CD4-positive, alpha-beta T cell (primary cell): ENCODE measurements at regions of chr19 and their contacts with region 1.

Region 1: DNA sequence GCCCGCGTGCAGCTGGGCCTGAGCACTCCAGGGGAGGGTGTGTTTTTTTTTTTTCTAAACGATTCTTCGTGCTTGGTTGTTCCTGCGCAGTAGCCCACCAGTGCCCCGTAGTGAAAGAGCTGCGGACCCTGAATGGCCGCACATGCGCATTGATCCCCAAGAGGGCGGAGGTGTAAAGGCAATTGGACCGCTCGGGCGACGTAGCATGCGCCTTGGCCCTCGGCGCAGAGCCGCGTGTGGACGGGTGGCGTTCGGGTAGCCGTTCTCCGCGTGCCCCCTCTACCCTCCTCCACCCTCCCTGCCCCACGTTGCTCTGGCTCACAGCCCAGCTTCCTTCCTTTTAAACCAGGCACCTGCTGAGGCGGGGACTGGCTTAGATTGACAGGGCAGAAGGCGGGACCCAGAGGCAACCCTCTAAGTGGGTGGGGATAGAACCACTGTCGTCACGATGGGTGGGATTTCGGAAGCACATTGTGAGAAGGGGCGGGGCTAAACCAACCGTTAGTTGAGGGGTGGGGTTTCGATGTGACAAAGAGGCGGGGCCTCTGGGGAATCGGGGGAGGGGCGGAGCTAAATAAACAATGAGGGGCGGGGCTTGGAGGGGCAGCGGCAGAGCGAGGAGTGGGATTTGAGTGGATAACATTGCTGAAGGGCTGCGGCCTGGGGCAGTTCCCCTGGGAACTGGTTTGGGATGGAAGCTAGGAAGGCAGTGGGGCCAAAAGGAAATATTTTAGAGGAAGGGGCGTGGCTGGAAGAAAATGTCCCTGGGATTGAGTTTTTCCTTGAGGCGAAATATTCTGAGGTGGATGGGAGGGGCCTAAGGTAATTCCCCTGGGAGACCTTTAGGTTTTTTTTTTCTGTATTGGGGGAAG is 543 bp upstream of the NUP62 start:
- DNase-seq: peak; percentile 82 to 98 (median 90)
- ATAC-seq: peak; percentile 87
- H3K4me3 ChIP-seq: peak overlapping the region; percentile 89
- H3K4me3 Mint-ChIP-seq: peak overlapping the region; percentile 99
- H3K27ac ChIP-seq: peak overlapping the region; percentile 90 to 93
- H3K27ac Mint-ChIP-seq: peak overlapping the region; percentile 96
- H3K4me1 ChIP-seq: peaks cover 73% of the 10 kb centered on the region
- H3K4me1 Mint-ChIP-seq: peaks cover 66% of the 10 kb centered on the region
- H3K27me3 ChIP-seq: no peaks in the 10 kb centered on the region
- H3K27me3 Mint-ChIP-seq: peaks cover 5% of the 10 kb centered on the region
- CTCF ChIP-seq: no peak

Region 2: GRCh38 chr19:49817964-49818648 is 111.7 kb before region 1 on chr19 and contains the start of gene MED25:
- CTCF ChIA-PET with region 1: no interaction called
- POLR2A ChIA-PET with region 1: interaction called, 5 read pairs
- intact Hi-C with region 1: loop called in 1 of 2 experiments (anchors 2 kb)
- DNase-seq: peak; percentile 78 to 96 (median 86)
- ATAC-seq: peak; percentile 60
- H3K4me3 ChIP-seq: peak within 1 kb of the TSS; percentile 66
- H3K4me3 Mint-ChIP-seq: peak within 1 kb of the TSS; percentile 99
- H3K27ac ChIP-seq: peak within 1 kb of the TSS; percentile 96 to 97
- H3K27ac Mint-ChIP-seq: peak within 1 kb of the TSS; percentile 99
- H3K4me1 ChIP-seq: peaks cover 34% of the 10 kb centered on the region
- H3K4me1 Mint-ChIP-seq: peaks cover 35% of the 10 kb centered on the region
- H3K27me3 ChIP-seq: no peaks in the 10 kb centered on the region
- H3K27me3 Mint-ChIP-seq: no peaks in the 10 kb centered on the region
- CTCF ChIP-seq: peak; percentile 38
- total RNA-seq, gene MED25: 67.2 to 67.8 TPM

Region 3: DNA sequence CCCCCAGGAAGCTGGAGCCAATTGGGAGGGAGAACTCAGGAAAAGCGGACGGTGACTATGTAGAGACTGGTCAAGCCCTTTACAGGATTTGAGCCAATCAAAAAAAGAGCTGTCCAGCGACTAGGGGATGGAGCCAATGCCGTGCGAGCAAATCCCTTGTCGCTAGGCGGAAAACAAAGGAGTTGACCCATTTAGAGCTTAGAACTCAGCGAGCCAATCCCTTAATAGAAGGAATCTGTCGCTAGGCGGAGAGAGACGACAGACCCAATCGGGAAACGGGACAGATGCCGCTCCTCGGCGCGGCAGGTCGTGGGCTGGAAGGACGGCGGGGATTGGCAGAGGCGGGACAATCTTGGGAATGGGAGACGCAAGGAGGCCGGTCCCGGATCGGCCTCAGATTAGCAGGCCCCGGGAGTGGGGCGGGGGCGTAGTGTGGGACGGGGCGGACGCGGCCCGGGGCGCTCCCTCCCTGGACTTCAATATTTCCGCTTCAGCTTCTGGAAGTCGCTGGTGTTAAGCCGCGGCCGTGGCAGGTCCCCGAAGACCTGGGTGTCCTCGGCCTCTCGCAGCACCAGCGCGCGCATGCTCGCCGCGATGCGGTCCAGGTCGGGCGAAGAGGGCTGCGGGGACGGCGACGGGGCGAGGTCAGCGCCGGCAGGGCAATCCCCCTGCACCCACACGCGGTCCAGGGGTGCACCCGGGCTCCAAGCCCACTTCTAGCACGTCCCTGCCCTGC is 60.2 kb before region 1 on chr19:
- CTCF ChIA-PET with region 1: no interaction called
- POLR2A ChIA-PET with region 1: interaction called, 11 read pairs
- intact Hi-C with region 1: no loop called
- DNase-seq: peak; percentile 78 to 98 (median 86)
- ATAC-seq: peak; percentile 77
- H3K4me3 ChIP-seq: peak overlapping the region; percentile 61
- H3K4me3 Mint-ChIP-seq: peak overlapping the region; percentile 78
- H3K27ac ChIP-seq: peak overlapping the region; percentile 68 to 76
- H3K27ac Mint-ChIP-seq: no peak overlapping the region
- H3K4me1 ChIP-seq: peaks cover 67% of the 10 kb centered on the region
- H3K4me1 Mint-ChIP-seq: peaks cover 35% of the 10 kb centered on the region
- H3K27me3 ChIP-seq: no peaks in the 10 kb centered on the region
- H3K27me3 Mint-ChIP-seq: no peaks in the 10 kb centered on the region
- CTCF ChIP-seq: no peak

Region 4: GRCh38 chr19:49889687-49890348 is 40.0 kb before region 1 on chr19:
- CTCF ChIA-PET with region 1: interaction called, 10 read pairs
- POLR2A ChIA-PET with region 1: interaction called, 6 read pairs
- intact Hi-C with region 1: loop called (anchors 2 to 5 kb)
- DNase-seq: peak; percentile 59 to 92 (median 70)
- ATAC-seq: peak; percentile 75
- H3K4me3 ChIP-seq: peak overlapping the region; percentile 66
- H3K4me3 Mint-ChIP-seq: peak overlapping the region; percentile 79
- H3K27ac ChIP-seq: peak overlapping the region in 1 of 2 donors; percentile 21
- H3K27ac Mint-ChIP-seq: no peak overlapping the region
- H3K4me1 ChIP-seq: peaks cover 24% of the 10 kb centered on the region
- H3K4me1 Mint-ChIP-seq: peaks cover 11% of the 10 kb centered on the region
- H3K27me3 ChIP-seq: no peaks in the 10 kb centered on the region
- H3K27me3 Mint-ChIP-seq: no peaks in the 10 kb centered on the region
- CTCF ChIP-seq: peak; percentile 91

Region 5: DNA sequence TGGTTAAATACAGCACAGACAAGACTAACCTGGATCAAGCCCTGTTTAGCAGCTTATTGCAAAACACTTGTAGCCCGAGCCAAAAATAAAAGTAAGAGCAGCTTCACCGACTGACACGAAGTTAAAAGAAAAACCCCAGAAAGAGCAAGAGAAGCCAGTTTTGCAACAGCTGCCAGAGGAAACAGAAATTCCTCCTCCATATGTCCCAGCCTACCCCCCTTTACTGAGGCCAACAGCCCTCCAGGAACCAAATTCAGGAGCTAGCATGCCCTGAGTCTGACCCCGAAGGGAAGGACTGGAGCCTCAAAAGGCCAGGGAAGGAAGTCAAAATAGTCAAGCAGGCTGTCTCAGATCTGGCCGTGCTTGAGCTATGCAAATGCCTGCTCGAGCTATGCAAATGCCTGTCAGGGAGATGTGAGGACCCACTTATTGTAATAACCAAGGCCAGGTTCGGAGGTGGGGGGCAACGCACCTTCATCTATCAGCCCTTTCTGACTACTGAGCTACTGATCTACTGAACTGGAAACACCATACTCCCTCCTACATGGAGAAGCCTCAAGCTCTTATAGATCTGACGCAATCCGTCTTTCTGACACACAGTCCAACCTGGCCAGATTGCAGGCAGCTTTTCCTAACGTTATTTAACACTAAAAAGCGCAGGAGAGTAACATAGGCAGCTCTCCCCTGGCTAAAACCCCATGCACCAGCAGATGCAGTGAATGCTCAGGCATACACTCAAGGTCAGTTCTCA is 24.4 kb after region 1 on chr19:
- CTCF ChIA-PET with region 1: no interaction called
- POLR2A ChIA-PET with region 1: no interaction called
- intact Hi-C with region 1: no loop called
- DNase-seq: no peak
- ATAC-seq: no peak
- H3K4me3 ChIP-seq: no peak overlapping the region
- H3K4me3 Mint-ChIP-seq: no peak overlapping the region
- H3K27ac ChIP-seq: no peak overlapping the region
- H3K27ac Mint-ChIP-seq: no peak overlapping the region
- H3K4me1 ChIP-seq: peaks cover 6% of the 10 kb centered on the region
- H3K4me1 Mint-ChIP-seq: no peaks in the 10 kb centered on the region
- H3K27me3 ChIP-seq: peaks cover 0 to 7% of the 10 kb centered on the region in 2 experiments
- H3K27me3 Mint-ChIP-seq: peaks cover 31% of the 10 kb centered on the region
- CTCF ChIP-seq: no peak

Region 6: GRCh38 chr19:49973987-49974386 is 44.1 kb after region 1 on chr19:
- CTCF ChIA-PET with region 1: no interaction called
- POLR2A ChIA-PET with region 1: no interaction called
- intact Hi-C with region 1: no loop called
- DNase-seq: peak in 1 of 14 experiments; percentile 15
- ATAC-seq: no peak
- H3K4me3 ChIP-seq: no peak overlapping the region
- H3K4me3 Mint-ChIP-seq: no peak overlapping the region
- H3K27ac ChIP-seq: no peak overlapping the region
- H3K27ac Mint-ChIP-seq: no peak overlapping the region
- H3K4me1 ChIP-seq: no peaks in the 10 kb centered on the region
- H3K4me1 Mint-ChIP-seq: no peaks in the 10 kb centered on the region
- H3K27me3 ChIP-seq: peaks cover 0 to 4% of the 10 kb centered on the region in 2 experiments
- H3K27me3 Mint-ChIP-seq: no peaks in the 10 kb centered on the region
- CTCF ChIP-seq: no peak

Region 7: GRCh38 chr19:50003810-50004419 is 74.1 kb after region 1 on chr19:
- CTCF ChIA-PET with region 1: no interaction called
- POLR2A ChIA-PET with region 1: no interaction called
- intact Hi-C with region 1: no loop called
- DNase-seq: peak in 3 of 14 experiments; percentile 24 to 44 (median 28)
- ATAC-seq: no peak
- H3K4me3 ChIP-seq: no peak overlapping the region
- H3K4me3 Mint-ChIP-seq: no peak overlapping the region
- H3K27ac ChIP-seq: no peak overlapping the region
- H3K27ac Mint-ChIP-seq: no peak overlapping the region
- H3K4me1 ChIP-seq: peaks cover 16% of the 10 kb centered on the region
- H3K4me1 Mint-ChIP-seq: peaks cover 4% of the 10 kb centered on the region
- H3K27me3 ChIP-seq: no peaks in the 10 kb centered on the region
- H3K27me3 Mint-ChIP-seq: no peaks in the 10 kb centered on the region
- CTCF ChIP-seq: no peak

Region 8: DNA sequence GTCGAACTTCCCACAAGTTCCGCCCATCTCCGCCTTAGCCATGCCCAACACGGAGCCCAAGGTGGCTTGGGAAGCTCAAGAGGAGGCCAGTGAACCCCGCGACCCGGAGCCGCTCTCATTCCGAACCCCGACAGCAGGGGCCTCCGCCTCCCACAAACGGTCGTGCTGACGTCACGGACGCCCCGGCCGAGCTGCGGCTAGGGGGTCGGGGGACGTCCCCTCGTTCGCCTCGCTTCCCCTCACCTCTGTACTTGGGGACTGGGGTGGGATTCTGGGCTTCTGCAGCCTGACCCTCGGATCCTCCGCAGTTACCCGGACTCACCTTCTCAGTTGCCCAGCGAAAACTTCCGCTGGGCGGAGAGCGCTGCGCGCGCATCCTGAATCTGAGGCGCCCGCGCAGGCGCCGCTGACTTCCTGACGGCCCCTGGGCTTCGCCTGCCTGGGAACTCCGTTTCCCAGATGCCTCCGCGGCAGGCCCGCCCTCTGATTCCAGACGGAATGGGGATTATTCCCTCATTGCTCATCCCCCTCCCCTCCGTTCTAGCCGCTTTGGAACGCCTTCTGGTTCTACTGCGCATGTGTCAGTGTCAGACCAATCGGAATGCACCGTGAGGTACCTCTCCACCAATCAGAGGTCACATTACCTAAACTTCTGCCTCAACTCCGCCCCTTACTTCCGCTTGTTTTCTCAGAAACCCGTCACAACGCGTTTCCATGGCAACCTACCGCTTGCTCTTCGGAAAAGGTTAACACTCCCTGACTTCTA is 95.4 kb after region 1 on chr19 and contains the start of gene VRK3:
- CTCF ChIA-PET with region 1: interaction called, 4 read pairs
- POLR2A ChIA-PET with region 1: interaction called, 13 read pairs
- intact Hi-C with region 1: loop called in 1 of 2 experiments (anchors 1 kb)
- DNase-seq: peak; percentile 95 to 100 (median 98)
- ATAC-seq: peak; percentile 83
- H3K4me3 ChIP-seq: peak within 1 kb of the TSS; percentile 94
- H3K4me3 Mint-ChIP-seq: peak within 1 kb of the TSS; percentile 87
- H3K27ac ChIP-seq: peak within 1 kb of the TSS; percentile 96 to 98
- H3K27ac Mint-ChIP-seq: peak within 1 kb of the TSS; percentile 94
- H3K4me1 ChIP-seq: peaks cover 49% of the 10 kb centered on the region
- H3K4me1 Mint-ChIP-seq: peaks cover 59% of the 10 kb centered on the region
- H3K27me3 ChIP-seq: no peaks in the 10 kb centered on the region
- H3K27me3 Mint-ChIP-seq: no peaks in the 10 kb centered on the region
- CTCF ChIP-seq: no peak
- total RNA-seq, gene VRK3: 65.1 to 65.4 TPM